ENCODE measurements at regions of chr4 and their contacts with region 1.

Region 1: GRCh38 chr4:8468746-8469535 is 28.4 kb downstream of the TRMT44 start:
- DNase-seq: peak; percentile 87
- H3K4me3 Mint-ChIP-seq: no peak overlapping the region
- H3K27ac Mint-ChIP-seq: no peak overlapping the region
- H3K4me1 Mint-ChIP-seq: no peaks in the 10 kb centered on the region
- H3K27me3 Mint-ChIP-seq: no peaks in the 10 kb centered on the region

Region 2: GRCh38 chr4:8495851-8496202 is 26.9 kb after region 1 on chr4:
- intact Hi-C with region 1: no loop called
- DNase-seq: no peak
- H3K4me3 Mint-ChIP-seq: no peak overlapping the region
- H3K27ac Mint-ChIP-seq: no peak overlapping the region
- H3K4me1 Mint-ChIP-seq: no peaks in the 10 kb centered on the region
- H3K27me3 Mint-ChIP-seq: no peaks in the 10 kb centered on the region

Region 3: DNA sequence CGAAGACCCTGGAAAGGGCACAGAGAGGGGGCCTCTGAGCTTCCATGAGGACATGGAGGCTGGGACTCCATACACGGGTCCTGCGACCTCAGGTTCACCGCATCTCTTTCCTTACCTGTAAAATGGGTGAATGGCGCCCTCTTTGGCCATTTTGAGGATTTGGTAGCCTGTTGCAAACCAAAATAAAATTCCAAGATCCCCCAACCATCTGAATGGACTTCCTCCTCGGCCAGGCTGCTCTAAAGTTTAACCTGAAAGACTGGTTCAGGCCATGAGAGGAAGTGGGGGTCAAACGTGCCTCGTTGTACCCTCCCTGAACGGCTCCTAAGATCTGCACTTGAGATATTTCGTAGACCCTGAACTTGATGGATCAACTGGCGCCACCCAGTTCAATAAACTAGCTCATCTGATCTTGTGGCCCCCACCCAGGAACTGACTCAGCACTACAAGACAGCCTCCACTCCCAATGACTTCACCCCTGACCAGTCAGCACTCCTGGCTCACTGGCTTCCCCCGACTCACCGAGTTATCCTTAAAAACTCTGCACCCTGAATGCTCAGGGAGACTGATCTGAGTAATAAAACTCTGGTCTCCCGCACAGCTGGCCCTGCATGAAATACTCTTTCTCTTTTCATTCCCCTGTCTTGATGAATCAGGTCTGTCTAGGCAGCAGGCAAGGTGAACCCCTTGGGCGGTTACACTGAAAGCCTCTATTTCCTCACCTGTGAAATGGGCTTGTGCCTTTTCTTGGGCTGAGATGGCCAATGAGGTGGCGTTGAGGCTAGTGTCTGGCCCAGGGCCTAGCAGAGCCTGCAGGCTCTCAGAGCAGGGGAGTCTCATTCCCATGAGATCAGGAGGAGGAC is 78.4 kb after region 1 on chr4:
- intact Hi-C with region 1: loop called (anchors 2 kb)
- DNase-seq: no peak
- H3K4me3 Mint-ChIP-seq: no peak overlapping the region
- H3K27ac Mint-ChIP-seq: no peak overlapping the region
- H3K4me1 Mint-ChIP-seq: no peaks in the 10 kb centered on the region
- H3K27me3 Mint-ChIP-seq: no peaks in the 10 kb centered on the region

Region 4: DNA sequence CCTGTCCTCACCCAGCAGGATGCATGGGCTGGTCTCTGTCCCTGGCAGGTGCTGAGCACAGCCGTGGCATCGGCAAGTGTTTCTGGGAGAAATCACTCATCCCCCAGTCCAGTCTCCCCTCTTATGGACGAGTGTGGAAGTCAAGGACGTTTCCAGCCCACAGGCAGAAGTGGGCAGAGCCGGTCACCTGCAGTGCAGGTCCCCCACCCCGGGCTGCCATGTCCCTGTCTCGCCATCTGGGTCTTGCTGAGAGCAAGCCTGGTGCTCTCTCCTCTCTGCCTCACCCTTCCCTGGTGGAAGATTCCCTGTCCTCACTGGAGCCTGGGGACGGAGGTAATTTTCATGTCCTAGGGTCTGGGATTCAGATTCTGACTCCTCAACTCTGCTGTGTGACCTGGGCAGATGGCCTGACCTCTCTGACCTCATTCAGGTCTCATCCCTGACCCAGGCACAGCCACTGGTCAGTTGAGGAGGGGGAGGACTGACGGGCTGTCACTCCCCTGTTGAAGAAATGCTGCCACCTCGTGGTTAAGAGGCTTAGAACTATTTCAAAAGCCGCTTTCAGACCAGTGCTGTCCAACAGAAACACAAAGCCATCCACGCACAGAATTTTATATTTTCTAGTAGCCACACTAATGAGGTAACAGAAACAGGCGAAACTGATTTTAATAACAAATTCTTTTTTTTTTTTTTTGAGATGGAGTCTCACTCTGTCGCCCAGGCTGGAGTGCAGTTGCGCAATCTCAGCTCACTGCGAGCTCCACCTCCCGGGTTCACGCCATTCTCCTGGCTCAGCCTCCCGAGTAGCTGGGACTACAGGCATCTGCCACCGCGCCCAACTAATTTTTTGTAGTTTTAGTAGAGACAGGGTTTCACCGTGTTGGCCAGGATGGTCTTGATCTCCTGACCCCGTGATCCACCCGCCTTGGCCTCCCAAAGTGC is 125.4 kb after region 1 on chr4:
- intact Hi-C with region 1: loop called (anchors 1 kb)
- DNase-seq: peak; percentile 71
- H3K4me3 Mint-ChIP-seq: no peak overlapping the region
- H3K27ac Mint-ChIP-seq: no peak overlapping the region
- H3K4me1 Mint-ChIP-seq: no peaks in the 10 kb centered on the region
- H3K27me3 Mint-ChIP-seq: peaks cover 21% of the 10 kb centered on the region